ENCODE measurements at regions of chrX and their contacts with region 1.

Region 1: DNA sequence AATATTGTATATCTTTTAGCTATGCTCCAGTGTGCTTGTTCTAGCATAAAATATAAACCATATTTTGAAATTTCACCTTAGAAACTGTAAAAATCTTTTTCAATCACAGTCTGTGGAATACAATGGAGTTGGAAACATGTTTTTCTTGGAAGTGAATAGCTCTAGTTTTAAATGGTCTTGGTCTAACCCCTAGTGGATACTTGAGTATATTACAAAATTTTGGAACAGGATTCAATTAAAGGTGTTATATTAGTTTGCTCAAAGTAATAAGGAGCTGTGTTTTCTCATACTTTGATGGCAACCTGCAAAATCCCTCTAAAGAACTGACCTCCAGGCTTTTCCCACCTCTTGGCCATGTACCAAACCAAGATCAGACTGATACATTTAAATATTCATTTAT is 48.2 kb downstream of the STK26 start:
- DNase-seq: peak; percentile 10
- H3K4me3 ChIP-seq: no peak overlapping the region
- H3K27ac ChIP-seq: no peak overlapping the region
- H3K4me1 ChIP-seq: no peaks in the 10 kb centered on the region
- H3K27me3 ChIP-seq: no peaks in the 10 kb centered on the region; the same call in none of the 2 replicates
- CTCF ChIP-seq: peak; percentile 61
- EP300 ChIP-seq: no peak
- RAD21 ChIP-seq: peak; percentile 67

Region 2: DNA sequence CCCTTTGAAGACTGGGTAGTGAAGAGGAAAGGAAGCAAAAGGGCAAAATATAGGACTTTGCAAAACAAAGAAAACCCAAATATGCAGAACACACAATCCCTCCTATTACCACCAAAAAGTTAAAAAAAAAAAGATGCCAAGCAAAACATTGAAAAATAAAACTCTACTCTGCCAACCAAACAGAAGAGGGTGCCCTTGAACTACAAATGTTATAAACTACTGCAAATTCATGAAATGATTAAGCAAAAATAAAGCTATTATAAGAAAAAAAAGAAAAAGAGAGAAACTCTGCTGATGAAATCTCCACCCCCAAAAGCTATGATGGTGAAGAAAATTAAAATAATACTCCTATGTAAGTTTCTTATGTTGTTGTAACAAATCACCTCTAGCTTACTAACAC is 216.7 kb before region 1 on chrX:
- CTCF ChIA-PET with region 1: interaction called, 21 read pairs
- POLR2A ChIA-PET with region 1: no interaction called
- DNase-seq: no peak
- H3K4me3 ChIP-seq: no peak overlapping the region
- H3K27ac ChIP-seq: no peak overlapping the region
- H3K4me1 ChIP-seq: no peaks in the 10 kb centered on the region
- H3K27me3 ChIP-seq: peaks cover 16% of the 10 kb centered on the region
- CTCF ChIP-seq: peak; percentile 53
- EP300 ChIP-seq: no peak
- RAD21 ChIP-seq: peak; percentile 67

Region 3: DNA sequence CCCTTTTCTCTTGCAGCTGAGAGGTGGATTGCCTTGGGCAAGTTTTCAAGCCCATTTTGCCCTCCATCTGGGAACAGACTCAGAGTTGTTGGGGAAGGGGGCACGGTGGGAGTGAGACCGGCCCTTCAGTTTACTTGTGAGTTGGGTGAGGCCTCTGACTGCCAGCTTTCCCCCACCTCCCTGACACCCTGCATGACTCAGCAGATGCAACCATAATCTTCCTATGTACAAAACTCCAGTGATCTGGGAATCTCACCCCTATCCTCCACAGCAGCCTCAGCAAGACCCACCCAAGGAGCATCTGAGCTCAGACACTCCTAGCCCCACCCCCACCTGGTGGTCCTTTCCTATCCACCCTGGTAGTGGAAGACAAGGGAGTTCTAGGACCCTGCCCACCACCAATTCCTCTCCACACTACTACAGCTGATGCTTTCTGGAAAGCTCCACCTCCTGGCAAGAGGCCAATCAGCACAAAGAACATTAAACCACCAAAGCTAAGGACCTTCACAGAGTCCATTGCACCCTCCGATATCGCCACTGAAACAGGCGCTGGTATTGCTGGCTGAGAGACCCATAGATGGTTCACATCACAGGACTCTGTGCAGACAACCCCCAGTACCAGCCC is 147.5 kb before region 1 on chrX:
- CTCF ChIA-PET with region 1: no interaction called
- POLR2A ChIA-PET with region 1: no interaction called
- DNase-seq: no peak
- H3K4me3 ChIP-seq: no peak overlapping the region
- H3K27ac ChIP-seq: no peak overlapping the region
- H3K4me1 ChIP-seq: no peaks in the 10 kb centered on the region
- H3K27me3 ChIP-seq: no peaks in the 10 kb centered on the region; the same call in 1 of the 2 replicates
- CTCF ChIP-seq: no peak
- EP300 ChIP-seq: no peak
- RAD21 ChIP-seq: no peak

Region 4: DNA sequence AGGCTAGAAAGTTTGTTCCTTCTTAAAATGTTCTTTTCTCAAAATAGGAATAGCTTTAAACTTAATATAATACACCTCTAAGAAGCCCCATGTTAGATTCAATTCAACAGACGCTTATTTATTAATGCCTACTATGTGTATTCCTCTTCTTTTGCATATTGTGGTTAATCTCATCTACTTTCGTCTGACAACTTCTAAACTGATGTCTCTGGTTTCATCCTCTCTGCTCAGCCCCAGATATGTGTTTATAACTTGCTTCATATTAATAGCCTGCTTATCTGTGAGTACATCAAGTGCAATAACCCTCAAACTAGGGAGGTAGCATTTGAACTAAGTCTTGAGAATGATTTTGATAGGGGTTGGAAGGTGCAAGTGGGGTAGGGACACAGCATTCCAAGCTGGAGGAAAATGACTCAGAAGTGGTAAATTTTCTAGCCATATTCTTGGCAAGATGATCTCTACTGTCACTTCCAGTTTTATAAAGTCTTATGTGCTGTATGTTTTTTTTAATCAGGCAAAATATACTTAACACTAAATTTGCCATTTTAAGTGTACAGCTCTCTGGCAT is 11.2 kb before region 1 on chrX:
- CTCF ChIA-PET with region 1: interaction called, 16 read pairs
- POLR2A ChIA-PET with region 1: no interaction called
- DNase-seq: no peak
- H3K4me3 ChIP-seq: no peak overlapping the region
- H3K27ac ChIP-seq: no peak overlapping the region
- H3K4me1 ChIP-seq: no peaks in the 10 kb centered on the region
- H3K27me3 ChIP-seq: no peaks in the 10 kb centered on the region; the same call in 1 of the 2 replicates
- CTCF ChIP-seq: no peak
- EP300 ChIP-seq: no peak
- RAD21 ChIP-seq: no peak

Region 5: DNA sequence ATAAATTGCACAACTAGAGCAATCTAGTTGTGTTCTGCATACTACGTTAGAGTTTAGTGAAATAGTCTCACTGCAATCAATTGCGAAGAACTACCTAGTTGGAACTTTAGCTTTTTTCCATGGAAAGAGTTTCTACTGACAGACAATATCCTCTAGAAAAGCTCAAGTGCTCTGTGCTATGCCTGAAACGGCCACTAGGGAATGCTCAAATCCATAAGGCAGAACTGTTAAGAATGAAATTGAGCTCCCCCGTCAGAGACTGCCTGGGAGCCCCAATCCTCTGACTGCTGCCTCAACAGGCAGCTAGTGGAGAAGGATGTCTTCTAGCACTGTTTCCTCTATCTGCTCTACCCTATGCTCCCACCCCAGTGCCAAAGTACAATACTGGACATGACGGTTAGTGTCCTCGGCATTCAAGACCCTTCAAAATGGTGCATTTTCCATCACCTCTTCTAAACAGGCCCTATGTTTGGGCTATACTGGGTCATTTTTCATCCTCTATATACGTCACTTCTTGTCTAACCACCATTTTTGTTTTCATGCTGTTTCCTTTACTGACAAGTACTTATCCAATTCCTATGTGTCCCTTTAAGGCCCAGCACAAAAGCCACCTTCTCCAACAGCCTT is 21.3 kb after region 1 on chrX:
- CTCF ChIA-PET with region 1: interaction called, 34 read pairs
- POLR2A ChIA-PET with region 1: no interaction called
- DNase-seq: peak; percentile 28
- H3K4me3 ChIP-seq: no peak overlapping the region
- H3K27ac ChIP-seq: peak overlapping the region in 1 of 2 experiments; percentile 85; a peak in 2 of 4 replicates
- H3K4me1 ChIP-seq: peaks cover 0 to 18% of the 10 kb centered on the region in 2 experiments; a peak in 1 of 4 replicates
- H3K27me3 ChIP-seq: no peaks in the 10 kb centered on the region; the same call in 1 of the 2 replicates
- CTCF ChIP-seq: peak; percentile 79
- EP300 ChIP-seq: no peak
- RAD21 ChIP-seq: peak; percentile 79

Measured in SK-N-SH (cell line).